ENCODE measurements at regions of chr1 and their contacts with region 1.

Region 1: DNA sequence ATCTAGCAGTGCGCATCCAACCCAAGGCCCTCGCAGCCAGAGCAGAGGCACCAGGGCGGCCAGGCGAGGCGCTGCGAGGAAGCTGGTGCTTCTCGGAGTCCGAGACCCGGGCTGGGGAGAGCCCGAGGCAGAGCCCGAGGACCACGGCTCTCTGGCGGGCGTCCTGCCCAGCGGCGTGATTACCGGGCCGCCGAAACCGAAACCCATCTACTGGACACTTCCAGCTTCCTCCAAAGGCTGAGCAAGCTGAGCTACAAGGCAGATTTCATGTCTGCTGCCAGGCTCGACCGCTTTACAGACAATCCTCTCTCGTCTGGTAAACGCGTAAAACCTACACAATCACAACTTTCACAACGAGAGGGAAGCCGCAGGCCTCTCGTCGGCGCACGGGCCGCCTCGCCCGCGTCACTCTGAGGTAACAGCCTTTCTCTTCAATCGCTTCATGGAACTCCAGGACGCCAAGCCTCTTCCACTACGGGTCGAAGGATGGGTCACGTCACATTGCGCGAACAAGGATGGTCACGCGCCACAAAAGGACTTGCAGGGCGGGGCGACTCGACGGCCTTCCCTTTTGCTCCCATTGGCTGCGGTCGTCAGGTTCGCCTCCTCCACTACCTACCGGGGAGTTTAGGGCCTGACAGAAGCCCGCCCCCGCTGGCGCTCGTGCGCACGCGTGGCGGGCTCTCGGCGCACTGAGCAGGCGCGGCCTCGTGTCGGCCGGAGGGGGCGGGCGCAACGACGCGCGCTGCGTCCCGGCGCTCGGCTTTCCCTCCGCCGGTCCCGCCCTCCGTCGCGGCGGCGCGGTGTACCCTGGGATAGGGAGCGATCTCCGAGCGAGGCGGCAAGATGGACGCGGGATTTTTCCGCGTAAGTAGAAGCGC is at the start of gene SRRM1:
- DNase-seq: peak; percentile 98 to 100 (median 100)
- H3K4me3 ChIP-seq: peak within 1 kb of the TSS; percentile 66 to 100 (median 95)
- H3K27ac ChIP-seq: peak within 1 kb of the TSS; percentile 80 to 100 (median 98)
- H3K27me3 ChIP-seq: no peaks in the 10 kb centered on the region
- CTCF ChIP-seq: peak in 34 of 56 donors; percentile 0 to 60 (median 16)
- total RNA-seq, gene SRRM1: 76.0 to 224 (median 129) TPM

Region 2: DNA sequence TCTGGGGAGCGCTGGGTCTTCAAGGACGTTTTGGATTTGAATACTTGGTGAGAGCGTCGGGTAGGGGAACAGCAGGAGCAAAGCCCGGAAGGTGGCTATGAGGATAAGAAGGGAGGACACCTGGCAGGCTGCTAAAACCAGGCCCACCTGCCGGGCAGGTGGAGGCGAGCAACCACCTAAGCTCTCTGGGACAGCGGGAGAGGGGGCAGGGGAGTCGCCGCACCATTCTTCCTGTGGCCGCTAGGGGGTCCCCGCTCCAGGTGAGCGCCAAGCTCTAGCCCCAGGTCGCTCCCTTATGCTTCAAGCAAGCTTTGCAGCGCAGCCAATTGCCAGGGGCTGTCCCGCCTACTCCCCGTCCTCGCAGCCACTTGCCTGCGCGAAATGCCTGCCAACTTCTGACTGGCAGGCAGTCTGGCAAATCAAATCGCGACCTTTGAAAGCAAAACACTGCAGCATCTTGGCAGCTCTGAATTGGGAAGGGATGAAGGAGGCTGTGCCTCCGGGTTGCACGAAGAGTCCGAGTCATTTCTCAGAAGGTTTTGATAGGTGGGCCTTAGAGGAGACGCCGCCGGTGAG is 227.3 kb before region 1 on chr1 and contains the start of gene NIPAL3:
- intact Hi-C with region 1: loop called (anchors 5 to 10 kb)
- DNase-seq: peak; percentile 91 to 98 (median 97)
- H3K4me3 ChIP-seq: peak within 1 kb of the TSS; percentile 57 to 98 (median 78)
- H3K27ac ChIP-seq: peak within 1 kb of the TSS in 58 of 59 donors; percentile 36 to 90 (median 78)
- H3K27me3 ChIP-seq: no peaks in the 10 kb centered on the region
- CTCF ChIP-seq: peak; percentile 49 to 85 (median 69)
- total RNA-seq, gene NIPAL3: 61.8 to 202 (median 104) TPM

Region 3: GRCh38 chr1:24705260-24706073 is 62.7 kb after region 1 on chr1:
- intact Hi-C with region 1: loop called in 1 of 2 experiments (anchors 10 kb)
- DNase-seq: peak; percentile 11 to 91 (median 86)
- H3K4me3 ChIP-seq: peak overlapping the region in 53 of 59 donors; percentile 7 to 61 (median 32)
- H3K27ac ChIP-seq: peak overlapping the region; percentile 67 to 98 (median 93)
- H3K27me3 ChIP-seq: no peaks in the 10 kb centered on the region
- CTCF ChIP-seq: peak in 39 of 56 donors; percentile 10 to 52 (median 36)

Region 4: DNA sequence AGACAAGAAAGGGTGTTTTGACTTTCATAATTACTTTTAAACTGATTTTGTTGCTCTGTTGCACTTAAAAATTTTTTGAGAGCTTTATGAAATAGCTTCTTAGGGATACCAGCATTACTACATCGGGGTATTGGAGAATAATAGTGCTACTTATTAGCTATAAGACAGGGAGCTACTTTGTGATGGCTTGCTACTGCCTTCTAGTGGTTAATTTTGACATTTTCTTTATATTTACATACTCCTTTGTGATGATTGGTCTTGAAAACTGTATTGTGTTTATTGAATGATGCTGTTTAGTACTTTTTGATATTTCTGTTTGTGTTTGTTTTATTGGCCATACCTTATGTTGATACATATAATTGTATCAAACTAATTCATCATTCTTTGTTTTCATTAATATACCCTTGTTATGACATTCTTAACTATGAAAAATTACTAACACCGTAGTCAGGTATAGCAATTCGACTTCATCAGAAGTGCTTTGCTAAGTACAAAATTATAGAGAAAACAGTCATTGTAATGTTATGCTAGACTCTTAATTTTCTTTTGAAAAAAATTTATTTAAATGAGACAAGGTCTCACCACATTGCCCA is 188.1 kb after region 1 on chr1:
- intact Hi-C with region 1: loop called in 1 of 2 experiments (anchors 5 kb)
- DNase-seq: no peak
- H3K4me3 ChIP-seq: peak overlapping the region in 4 of 59 donors; percentile 4 to 40 (median 27)
- H3K27ac ChIP-seq: peak overlapping the region in 37 of 59 donors; percentile 5 to 75 (median 48)
- H3K27me3 ChIP-seq: no peaks in the 10 kb centered on the region
- CTCF ChIP-seq: peak; percentile 73 to 95 (median 85)

Measured in dorsolateral prefrontal cortex (tissue), 120 donors.